GM18951 (cell line): ENCODE measurements at regions of chr14 and their contacts with region 1.

Region 1: GRCh38 chr14:35847636-35848035 is 21.5 kb downstream of the BRMS1L start:
- POLR2A ChIP-seq: no peak

Region 2: GRCh38 chr14:34078117-34078743 is 1769.4 kb before region 1 on chr14:
- in situ Hi-C with region 1: loop called (anchors 10 kb)
- POLR2A ChIP-seq: no peak